ENCODE measurements at regions of chr1 and their contacts with region 1.

Region 1: DNA sequence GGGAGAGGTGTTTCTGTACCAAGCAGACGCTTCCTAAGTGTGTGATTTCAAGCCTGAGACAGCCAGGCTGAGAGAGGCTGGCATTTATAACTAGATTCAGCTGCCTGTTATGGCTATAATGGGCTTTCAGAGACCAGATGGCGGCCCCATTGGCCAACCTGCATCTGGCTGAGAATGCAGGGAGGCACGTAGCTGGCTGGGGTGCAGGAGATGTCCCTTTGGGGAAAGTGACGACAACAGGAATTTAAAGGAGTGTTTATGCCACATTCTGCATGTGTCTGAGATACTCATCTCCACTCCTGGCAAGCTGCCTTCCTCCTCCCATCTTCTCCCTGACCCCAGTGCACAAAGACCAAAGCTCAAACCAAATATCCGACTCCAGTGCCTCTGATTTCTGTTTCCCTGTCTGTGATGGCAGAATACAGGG is 21.3 kb upstream of the CCDC190 start:
- DNase-seq: peak in 2 of 5 donors; percentile 33 to 56
- H3K4me3 ChIP-seq: no peak overlapping the region
- H3K27ac ChIP-seq: no peak overlapping the region
- H3K4me1 ChIP-seq: no peaks in the 10 kb centered on the region
- H3K27me3 ChIP-seq: no peaks in the 10 kb centered on the region
- CTCF ChIP-seq: no peak

Region 2: GRCh38 chr1:163174524-163175437 is 292.5 kb after region 1 on chr1:
- intact Hi-C with region 1: loop called (anchors 10 kb)
- DNase-seq: peak; percentile 54 to 74 (median 69)
- H3K4me3 ChIP-seq: peak overlapping the region in 1 of 3 donors; percentile 7
- H3K27ac ChIP-seq: no peak overlapping the region
- H3K4me1 ChIP-seq: peaks cover 0 to 3% (median 0%) of the 10 kb centered on the region in 3 donors
- H3K27me3 ChIP-seq: no peaks in the 10 kb centered on the region
- CTCF ChIP-seq: peak; percentile 86

Measured in kidney (tissue), 22 donors.